ENCODE measurements at regions of chr10 and their contacts with region 1.

Region 1: DNA sequence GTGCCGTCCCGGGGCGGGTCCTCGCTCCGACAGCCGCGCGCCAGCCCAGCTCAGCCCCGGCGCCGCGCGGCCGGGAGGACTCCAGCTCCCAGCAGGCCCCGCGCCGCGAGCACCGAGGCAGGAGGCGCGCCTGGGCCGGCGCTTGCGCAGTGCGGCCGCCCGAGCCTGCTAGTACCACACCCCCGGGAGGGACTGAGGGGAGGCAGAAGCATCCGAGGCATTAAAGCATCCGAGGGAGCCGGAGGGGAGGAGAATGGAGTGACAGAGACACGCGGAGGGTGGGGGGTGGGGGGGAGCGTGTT is at the start of gene GRK5:
- DNase-seq: peak; percentile 96 to 99 (median 98)
- ATAC-seq: peak; percentile 91
- H3K4me3 ChIP-seq: peak within 1 kb of the TSS; percentile 75
- H3K4me3 Mint-ChIP-seq: peak within 1 kb of the TSS; percentile 94 to 98 (median 97)
- H3K27ac ChIP-seq: peak within 1 kb of the TSS; percentile 89
- H3K27ac Mint-ChIP-seq: peak within 1 kb of the TSS; percentile 91 to 99 (median 96)
- H3K4me1 ChIP-seq: peaks cover 23 to 35% of the 10 kb centered on the region in 2 donors
- H3K4me1 Mint-ChIP-seq: peaks cover 41 to 48% (median 44%) of the 10 kb centered on the region in 7 donors
- H3K27me3 ChIP-seq: no peaks in the 10 kb centered on the region
- H3K27me3 Mint-ChIP-seq: no peaks in the 10 kb centered on the region
- total RNA-seq, gene GRK5: 20.3 to 45.2 (median 34.2) TPM

Region 2: DNA sequence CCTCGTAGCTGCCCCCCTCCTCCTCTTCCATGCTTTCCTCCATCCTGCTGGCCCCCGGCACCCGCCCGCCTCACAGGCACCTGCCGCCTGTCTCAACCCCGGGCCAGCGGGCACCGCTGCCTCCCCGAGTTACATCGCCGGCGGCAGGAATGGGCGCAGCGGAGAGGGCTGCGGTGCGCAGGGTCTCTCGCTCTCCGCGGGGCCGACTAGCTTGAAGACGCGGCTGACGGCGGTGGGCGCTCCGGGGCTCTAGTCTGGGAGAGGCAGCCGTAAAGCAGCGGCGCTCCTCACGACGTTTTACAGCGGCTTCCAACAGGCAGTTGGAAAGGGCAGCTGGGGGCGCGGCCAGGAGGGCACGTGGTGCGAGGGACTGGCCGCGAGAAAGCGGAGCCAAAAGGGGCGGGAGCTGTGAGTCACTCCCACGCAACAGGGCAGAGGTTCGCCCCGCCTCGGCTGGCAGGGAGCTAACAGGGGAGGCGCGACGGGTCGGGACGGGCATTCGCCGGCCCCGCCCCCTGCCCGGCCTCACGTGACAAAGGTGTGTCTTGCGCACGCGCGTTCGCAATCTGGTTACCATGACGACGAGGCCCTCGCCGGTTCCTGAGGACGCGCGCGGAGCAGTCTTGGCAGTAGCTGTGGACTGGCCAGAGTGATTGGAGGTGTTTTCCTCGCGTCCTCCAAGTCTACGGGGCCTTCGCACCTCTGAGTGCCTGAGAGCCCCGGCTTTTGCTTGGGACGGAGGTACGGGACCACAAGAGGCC is 452.4 kb before region 1 on chr10 and contains the start of gene CACUL1:
- CTCF ChIA-PET with region 1: no interaction called
- POLR2A ChIA-PET with region 1: no interaction called
- intact Hi-C with region 1: loop called in 1 of 2 experiments (anchors 10 kb)
- DNase-seq: peak; percentile 99 to 100 (median 100)
- ATAC-seq: peak; percentile 99
- H3K4me3 ChIP-seq: peak within 1 kb of the TSS; percentile 92
- H3K4me3 Mint-ChIP-seq: peak within 1 kb of the TSS; percentile 92 to 98 (median 95)
- H3K27ac ChIP-seq: peak within 1 kb of the TSS; percentile 80
- H3K27ac Mint-ChIP-seq: peak within 1 kb of the TSS; percentile 86 to 96 (median 92)
- H3K4me1 ChIP-seq: peaks cover 17 to 24% of the 10 kb centered on the region in 2 donors
- H3K4me1 Mint-ChIP-seq: peaks cover 24 to 47% (median 40%) of the 10 kb centered on the region in 7 donors
- H3K27me3 ChIP-seq: no peaks in the 10 kb centered on the region
- H3K27me3 Mint-ChIP-seq: peaks cover 0 to 19% (median 0%) of the 10 kb centered on the region in 5 donors
- total RNA-seq, gene CACUL1: 28.0 to 66.6 (median 34.3) TPM

Region 3: DNA sequence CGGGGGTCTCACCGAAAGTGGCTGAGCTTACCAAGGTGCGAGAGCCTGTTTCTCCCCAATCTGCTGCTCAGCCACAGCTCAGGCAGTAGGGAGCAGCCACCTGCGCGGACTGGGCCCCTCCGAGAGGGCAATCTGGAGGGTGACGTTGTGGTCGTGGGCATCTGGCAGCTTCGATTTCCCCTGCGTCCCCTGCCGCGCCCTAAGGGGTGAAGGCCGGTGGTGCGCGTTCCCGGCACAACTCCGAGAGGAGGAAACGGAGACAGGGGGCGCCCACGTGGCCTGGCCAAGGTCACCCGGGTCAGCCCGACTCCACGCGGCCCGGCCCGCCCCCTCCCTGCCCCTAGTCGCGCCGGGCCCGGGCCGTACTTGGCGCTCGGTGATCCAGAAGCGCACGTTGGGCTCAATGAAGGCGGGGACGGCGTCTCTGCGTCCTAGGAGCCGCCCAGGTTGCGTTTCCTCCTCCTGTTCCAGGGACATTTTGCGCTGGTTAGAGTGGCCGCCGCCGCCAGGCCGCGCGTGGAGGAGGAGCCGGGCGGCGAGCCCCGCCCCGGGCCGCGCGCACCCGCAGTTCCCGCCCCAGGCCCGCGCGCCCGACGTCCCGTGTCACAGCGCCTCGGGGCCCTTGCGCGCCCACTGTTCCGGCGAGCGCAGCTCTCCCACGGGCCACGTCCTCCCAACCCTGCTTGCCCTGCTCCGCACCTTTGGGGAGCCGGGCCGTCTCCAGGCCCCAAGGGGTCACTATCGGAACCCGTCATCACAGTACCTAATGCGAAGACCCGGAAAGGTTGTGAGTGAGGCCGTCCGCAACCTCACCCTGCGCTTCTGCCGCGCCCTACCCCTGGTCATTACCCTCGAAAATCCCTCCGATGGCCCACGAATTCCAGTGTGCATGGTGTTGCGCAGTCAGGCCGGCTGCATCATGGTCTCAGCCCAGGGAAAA is 41.9 kb before region 1 on chr10 and contains the start of gene SFXN4:
- CTCF ChIA-PET with region 1: interaction called, 3 read pairs
- POLR2A ChIA-PET with region 1: interaction called, 3 read pairs
- intact Hi-C with region 1: loop called (anchors 1 kb)
- DNase-seq: peak; percentile 72 to 87 (median 84)
- ATAC-seq: peak; percentile 98
- H3K4me3 ChIP-seq: peak within 1 kb of the TSS; percentile 95
- H3K4me3 Mint-ChIP-seq: peak within 1 kb of the TSS; percentile 89 to 95 (median 92)
- H3K27ac ChIP-seq: peak within 1 kb of the TSS; percentile 88
- H3K27ac Mint-ChIP-seq: peak within 1 kb of the TSS; percentile 85 to 98 (median 95)
- H3K4me1 ChIP-seq: peaks cover 12 to 15% of the 10 kb centered on the region in 2 donors
- H3K4me1 Mint-ChIP-seq: peaks cover 22 to 39% (median 32%) of the 10 kb centered on the region in 7 donors
- H3K27me3 ChIP-seq: no peaks in the 10 kb centered on the region
- H3K27me3 Mint-ChIP-seq: no peaks in the 10 kb centered on the region
- total RNA-seq, gene SFXN4: 11.8 to 28.1 (median 23.1) TPM

Region 4: DNA sequence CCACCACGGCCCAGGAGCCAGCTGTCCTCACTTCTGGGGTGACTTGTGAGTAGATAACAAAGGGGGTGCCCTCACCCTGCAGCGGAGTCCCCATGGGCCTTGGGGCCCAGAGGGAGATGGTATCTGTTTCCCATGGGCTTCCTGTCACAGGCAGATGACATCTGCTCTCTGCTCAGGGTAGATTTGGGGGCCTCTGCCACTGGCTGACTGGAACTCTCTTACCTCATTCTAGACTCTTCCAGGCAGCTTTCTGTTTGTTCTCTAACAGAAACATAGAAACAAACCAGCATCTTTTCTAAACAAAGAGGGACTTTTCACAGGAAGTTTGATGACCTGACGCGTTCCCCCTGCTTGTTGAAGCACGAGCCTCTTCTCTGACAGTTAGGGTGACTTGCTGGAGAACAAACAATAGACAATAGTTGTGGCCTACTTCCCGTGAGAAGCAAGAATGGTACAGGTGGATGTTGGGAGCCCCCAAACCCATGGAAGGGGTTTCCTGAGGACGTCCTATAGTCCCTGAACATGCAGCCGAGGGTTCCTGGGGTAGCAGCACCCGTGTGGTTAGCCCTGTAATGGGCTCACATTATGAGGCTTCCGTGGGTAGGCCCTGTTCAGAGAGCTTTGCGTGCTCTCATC is 61.7 kb after region 1 on chr10:
- CTCF ChIA-PET with region 1: interaction called, 6 read pairs
- POLR2A ChIA-PET with region 1: interaction called, 5 read pairs
- intact Hi-C with region 1: loop called (anchors 1 kb)
- DNase-seq: peak; percentile 51 to 97 (median 89)
- ATAC-seq: peak; percentile 92
- H3K4me3 ChIP-seq: peak overlapping the region; percentile 20
- H3K4me3 Mint-ChIP-seq: peak overlapping the region; percentile 52 to 77 (median 64)
- H3K27ac ChIP-seq: peak overlapping the region; percentile 96
- H3K27ac Mint-ChIP-seq: peak overlapping the region; percentile 92 to 100 (median 98)
- H3K4me1 ChIP-seq: peaks cover 43 to 48% of the 10 kb centered on the region in 2 donors
- H3K4me1 Mint-ChIP-seq: peaks cover 28 to 72% (median 64%) of the 10 kb centered on the region in 7 donors
- H3K27me3 ChIP-seq: no peaks in the 10 kb centered on the region
- H3K27me3 Mint-ChIP-seq: no peaks in the 10 kb centered on the region

Region 5: DNA sequence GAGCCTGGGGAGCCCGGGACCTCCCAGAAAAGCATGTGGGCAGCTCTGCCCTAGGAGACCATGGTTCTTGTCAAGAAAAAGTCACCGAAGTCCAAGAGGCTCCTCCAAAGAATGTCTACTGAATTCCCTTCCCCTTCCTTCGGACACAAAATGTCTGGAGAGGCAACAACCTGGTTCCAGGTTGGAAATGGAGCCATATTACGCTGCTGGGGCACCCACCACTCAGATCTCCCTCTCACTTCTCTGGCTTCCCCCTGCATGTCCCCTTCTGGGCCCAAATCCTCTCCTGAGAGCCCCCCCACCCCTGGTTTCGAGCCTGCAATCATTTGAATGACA is 282.6 kb after region 1 on chr10:
- CTCF ChIA-PET with region 1: interaction called, 3 read pairs
- POLR2A ChIA-PET with region 1: interaction called, 3 read pairs
- intact Hi-C with region 1: loop called in 1 of 2 experiments (anchors 1 kb)
- DNase-seq: no peak
- ATAC-seq: no peak
- H3K4me3 ChIP-seq: peak overlapping the region; percentile 55
- H3K4me3 Mint-ChIP-seq: peak overlapping the region; percentile 53 to 92 (median 84)
- H3K27ac ChIP-seq: peak overlapping the region; percentile 83
- H3K27ac Mint-ChIP-seq: peak overlapping the region; percentile 80 to 98 (median 92)
- H3K4me1 ChIP-seq: peaks cover 24 to 36% of the 10 kb centered on the region in 2 donors
- H3K4me1 Mint-ChIP-seq: peaks cover 19 to 66% (median 59%) of the 10 kb centered on the region in 7 donors
- H3K27me3 ChIP-seq: no peaks in the 10 kb centered on the region
- H3K27me3 Mint-ChIP-seq: no peaks in the 10 kb centered on the region

Region 6: DNA sequence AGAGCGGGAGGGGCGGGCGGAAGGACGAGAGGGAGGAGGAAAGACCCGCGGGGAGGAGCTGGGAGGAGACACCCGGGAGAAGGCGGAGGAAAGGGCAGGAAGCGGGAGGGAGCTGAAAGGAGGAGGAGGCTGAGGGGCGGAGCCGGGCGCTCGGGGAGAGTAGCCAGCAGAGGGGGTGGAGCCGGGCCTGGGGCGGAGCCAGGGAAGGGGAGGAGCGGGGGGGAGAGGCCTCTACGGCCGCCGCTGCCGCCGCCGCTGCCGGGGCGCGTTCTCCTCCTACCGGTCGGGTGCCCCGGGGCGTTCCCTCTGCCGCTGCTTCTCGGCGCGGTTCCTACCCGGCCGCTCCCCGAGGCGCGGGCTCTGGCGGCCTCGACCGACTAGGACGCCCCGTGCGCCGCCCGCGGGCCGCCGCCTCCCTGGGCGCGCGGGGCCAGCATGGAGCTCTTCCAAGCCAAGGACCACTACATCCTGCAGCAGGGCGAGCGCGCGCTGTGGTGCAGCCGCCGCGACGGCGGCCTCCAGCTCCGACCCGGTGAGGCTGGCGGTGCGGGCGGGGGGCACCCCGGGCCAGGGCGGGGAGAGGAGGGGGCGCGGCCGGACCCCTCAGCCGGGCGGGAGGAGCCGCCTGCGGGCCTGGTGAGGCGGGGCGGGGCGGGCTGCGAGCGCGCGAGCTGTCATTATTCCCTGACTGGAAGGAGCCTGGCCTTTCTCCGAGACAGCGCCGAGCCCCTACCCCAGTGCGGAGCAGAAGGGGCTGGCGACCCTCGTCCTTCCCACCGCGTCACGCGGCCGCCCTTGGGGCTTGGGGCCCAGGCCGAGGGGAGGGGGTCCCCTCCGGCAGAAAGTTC is 518.7 kb after region 1 on chr10 and contains the start of gene INPP5F:
- CTCF ChIA-PET with region 1: no interaction called
- POLR2A ChIA-PET with region 1: interaction called, 3 read pairs
- intact Hi-C with region 1: loop called in 1 of 2 experiments (anchors 1 kb)
- DNase-seq: peak; percentile 95 to 100 (median 96)
- ATAC-seq: peak; percentile 98
- H3K4me3 ChIP-seq: peak within 1 kb of the TSS; percentile 78
- H3K4me3 Mint-ChIP-seq: peak within 1 kb of the TSS; percentile 89 to 95 (median 94)
- H3K27ac ChIP-seq: peak within 1 kb of the TSS; percentile 76
- H3K27ac Mint-ChIP-seq: peak within 1 kb of the TSS; percentile 71 to 92 (median 87)
- H3K4me1 ChIP-seq: peaks cover 11 to 24% of the 10 kb centered on the region in 2 donors
- H3K4me1 Mint-ChIP-seq: peaks cover 25 to 53% (median 38%) of the 10 kb centered on the region in 7 donors
- H3K27me3 ChIP-seq: no peaks in the 10 kb centered on the region
- H3K27me3 Mint-ChIP-seq: no peaks in the 10 kb centered on the region
- total RNA-seq, gene INPP5F: 8.5 to 12.1 (median 10.0) TPM

Measured in naive thymus-derived CD4-positive, alpha-beta T cell (primary cell).